Endothelial cell of umbilical vein (primary cell): ENCODE measurements at regions of chr5 and their contacts with region 1.

Region 1: GRCh38 chr5:100576217-100576751 is 41.1 kb downstream of the FAM174A start:
- DNase-seq: peak; percentile 83
- H3K4me3 ChIP-seq: peak overlapping the region in 1 of 3 experiments; percentile 32
- H3K27ac ChIP-seq: peak overlapping the region; percentile 92
- H3K4me1 ChIP-seq: peaks cover 24% of the 10 kb centered on the region
- H3K27me3 ChIP-seq: no peaks in the 10 kb centered on the region
- CTCF ChIP-seq: no peak
- POLR2A ChIP-seq: no peak

Region 2: DNA sequence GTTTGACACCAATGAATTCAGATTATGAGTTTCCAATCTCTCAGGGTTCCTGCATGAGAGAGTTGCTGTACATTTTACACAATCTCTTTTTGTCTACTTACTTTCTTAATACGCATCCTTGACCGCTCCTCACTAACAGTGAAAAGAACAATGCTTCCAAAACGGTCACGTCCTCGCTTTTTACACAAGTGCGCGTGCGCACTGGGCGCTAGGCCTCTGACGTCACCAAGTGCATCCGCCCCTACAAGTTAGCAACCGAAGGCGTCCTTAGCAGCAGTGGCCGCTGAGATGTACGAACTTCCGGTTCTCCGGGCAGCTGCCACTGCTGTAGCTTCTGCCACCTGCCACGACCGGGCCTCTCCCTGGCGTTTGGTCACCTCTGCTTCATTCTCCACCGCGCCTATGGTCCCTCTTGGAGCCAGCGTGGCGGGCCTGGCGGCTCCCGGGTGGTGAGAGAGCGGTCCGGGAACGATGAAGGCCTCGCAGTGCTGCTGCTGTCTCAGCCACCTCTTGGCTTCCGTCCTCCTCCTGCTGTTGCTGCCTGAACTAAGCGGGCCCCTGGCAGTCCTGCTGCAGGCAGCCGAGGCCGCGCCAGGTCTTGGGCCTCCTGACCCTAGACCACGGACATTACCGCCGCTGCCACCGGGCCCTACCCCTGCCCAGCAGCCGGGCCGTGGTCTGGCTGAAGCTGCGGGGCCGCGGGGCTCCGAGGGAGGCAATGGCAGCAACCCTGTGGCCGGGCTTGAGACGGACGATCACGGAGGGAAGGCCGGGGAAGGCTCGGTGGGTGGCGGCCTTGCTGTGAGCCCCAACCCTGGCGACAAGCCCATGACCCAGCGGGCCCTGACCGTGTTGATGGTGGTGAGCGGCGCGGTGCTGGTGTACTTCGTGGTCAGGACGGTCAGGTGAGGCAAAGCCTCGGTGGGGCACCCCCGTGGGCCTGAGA is 41.0 kb before region 1 on chr5 and contains the start of gene FAM174A:
- CTCF ChIA-PET with region 1: interaction called, 4 read pairs
- POLR2A ChIA-PET with region 1: no interaction called
- dilution Hi-C with region 1: no loop called
- intact Hi-C with region 1: loop called (anchors 1 kb)
- DNase-seq: peak; percentile 98
- H3K4me3 ChIP-seq: peak within 1 kb of the TSS; percentile 40 to 71 (median 61)
- H3K27ac ChIP-seq: peak within 1 kb of the TSS; percentile 53
- H3K4me1 ChIP-seq: peaks cover 7% of the 10 kb centered on the region
- H3K27me3 ChIP-seq: no peaks in the 10 kb centered on the region
- CTCF ChIP-seq: no peak
- POLR2A ChIP-seq: peak; percentile 95
- total RNA-seq, gene FAM174A: 11.8 and 14.7 TPM in 2 replicates